ENCODE measurements at regions of chr15 and their contacts with region 1.

Region 1: DNA sequence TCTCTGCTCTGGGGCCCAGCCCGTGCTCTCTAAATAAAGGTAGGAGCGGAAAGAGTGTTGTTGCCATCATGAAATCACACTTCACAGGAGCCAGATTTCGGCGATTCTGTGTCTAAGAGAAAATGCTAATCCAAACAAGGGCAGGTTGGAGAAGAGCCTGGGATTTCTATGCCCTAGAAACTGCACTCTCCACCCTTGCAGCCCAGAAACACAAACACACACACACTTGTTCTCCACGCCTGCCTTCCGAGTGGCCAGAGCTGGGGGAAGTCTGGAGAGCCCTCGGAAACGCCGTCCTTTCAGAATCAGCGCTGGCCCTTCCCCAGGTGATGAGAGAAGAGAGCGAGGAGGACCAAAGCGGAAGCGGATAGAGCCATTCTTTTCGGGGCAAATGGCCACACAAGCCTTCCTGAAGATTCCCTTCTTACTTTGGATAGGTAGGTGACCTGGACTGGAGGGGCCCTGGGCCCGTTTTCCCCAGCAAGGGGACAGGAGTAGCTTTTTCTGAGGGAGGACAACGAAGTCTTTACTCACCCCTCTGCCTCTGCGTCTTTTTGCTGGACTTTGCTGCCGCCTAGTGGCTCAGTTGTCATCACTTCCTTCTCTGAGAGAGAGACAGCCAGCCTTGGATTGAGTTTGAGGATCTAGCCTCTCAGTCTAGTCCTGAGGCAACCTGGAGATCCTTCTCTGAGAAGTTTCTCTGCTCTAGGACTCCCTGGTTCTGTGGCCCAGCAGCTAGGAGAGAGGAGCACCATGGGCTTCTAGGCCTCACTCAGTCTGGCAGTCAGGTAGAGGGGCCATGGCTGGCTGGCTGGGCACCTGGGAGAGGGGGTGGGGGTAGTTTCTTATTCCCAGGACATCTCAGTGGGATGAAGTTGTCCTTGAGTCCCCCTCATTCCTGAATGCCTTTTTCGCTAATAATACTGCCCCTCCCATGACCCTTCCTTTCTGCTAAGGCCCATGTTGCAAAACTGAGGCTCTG is 37.7 kb downstream of the SENP8 start:
- DNase-seq: peak; percentile 81

Region 2: DNA sequence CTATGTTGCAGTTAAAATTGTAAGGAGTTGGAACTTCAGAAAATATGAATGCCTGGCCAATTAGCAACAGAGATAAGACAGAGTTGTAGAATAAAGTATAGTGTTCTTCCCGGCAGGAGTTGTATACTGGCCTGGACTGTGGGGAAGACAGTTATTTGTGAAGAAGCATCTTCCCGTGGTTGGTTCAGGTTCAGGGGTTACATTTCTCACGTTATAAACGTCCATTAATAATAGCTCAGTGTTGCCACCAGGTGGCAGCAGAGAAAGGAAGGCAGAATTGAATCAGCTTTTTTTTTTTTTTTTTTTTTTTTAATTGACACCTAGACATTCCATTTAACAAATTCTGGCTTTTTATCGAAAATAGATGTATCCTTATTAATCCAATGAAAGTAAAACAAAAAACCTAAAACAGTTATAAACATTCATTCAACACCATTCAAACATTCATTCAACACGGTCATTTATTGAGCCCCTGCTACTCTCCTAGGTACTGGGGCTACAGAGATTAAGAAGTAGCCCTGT is 412.0 kb before region 1 on chr15:
- CTCF ChIA-PET with region 1: interaction called, 14 read pairs
- POLR2A ChIA-PET with region 1: no interaction called
- DNase-seq: peak; percentile 56

Region 3: GRCh38 chr15:71752604-71753289 is 403.2 kb before region 1 on chr15:
- CTCF ChIA-PET with region 1: interaction called, 11 read pairs
- POLR2A ChIA-PET with region 1: no interaction called
- DNase-seq: peak; percentile 48

Region 4: DNA sequence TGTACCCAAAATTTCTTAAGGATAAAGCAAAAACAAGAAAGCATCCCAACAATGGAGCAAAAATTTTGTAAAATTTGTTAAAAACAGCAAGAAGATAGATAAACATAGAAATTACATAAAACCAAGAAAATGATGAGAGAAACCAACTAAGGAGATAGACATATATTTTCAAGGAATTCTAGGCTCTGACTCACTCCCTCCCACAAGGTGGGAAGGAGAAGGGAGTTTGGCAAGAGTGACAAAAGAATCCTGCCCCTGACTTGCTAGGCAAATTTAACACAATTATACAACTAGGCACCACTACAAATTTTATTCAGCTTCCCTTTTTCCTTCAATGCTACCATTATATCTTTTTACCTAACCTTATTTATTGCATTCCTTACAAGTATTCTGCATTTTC is 108.9 kb before region 1 on chr15:
- CTCF ChIA-PET with region 1: no interaction called
- POLR2A ChIA-PET with region 1: no interaction called
- DNase-seq: no peak

Region 5: DNA sequence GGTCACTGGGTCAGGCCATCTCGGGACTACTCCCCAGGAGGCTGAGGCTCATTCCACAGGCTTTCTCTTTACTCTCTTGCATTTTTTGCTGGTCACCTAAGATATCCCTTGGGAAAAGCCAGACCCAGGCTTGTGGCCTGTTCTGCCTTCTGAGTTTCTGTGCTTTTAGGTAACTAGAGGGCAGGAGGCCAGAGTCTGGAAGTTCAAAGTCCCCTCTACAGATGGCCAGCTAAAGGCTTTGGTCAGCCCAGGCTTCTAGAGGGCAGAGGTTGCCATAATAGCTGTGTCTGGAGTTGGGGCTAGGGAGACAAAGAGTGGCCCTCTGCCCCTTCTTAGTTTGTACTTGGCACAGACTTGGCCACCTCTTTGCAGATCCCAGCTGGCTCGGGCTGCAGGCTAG is 124.8 kb after region 1 on chr15:
- CTCF ChIA-PET with region 1: interaction called, 10 read pairs
- POLR2A ChIA-PET with region 1: no interaction called
- DNase-seq: no peak

Region 6: GRCh38 chr15:72375847-72376581 is 220.1 kb after region 1 on chr15 and contains the start of gene HEXA:
- CTCF ChIA-PET with region 1: no interaction called
- POLR2A ChIA-PET with region 1: no interaction called
- DNase-seq: peak; percentile 97

Region 7: GRCh38 chr15:72406927-72407326 is 251.0 kb after region 1 on chr15:
- CTCF ChIA-PET with region 1: no interaction called
- POLR2A ChIA-PET with region 1: no interaction called
- DNase-seq: no peak